ENCODE measurements at regions of chr2 and their contacts with region 1.

Region 1: DNA sequence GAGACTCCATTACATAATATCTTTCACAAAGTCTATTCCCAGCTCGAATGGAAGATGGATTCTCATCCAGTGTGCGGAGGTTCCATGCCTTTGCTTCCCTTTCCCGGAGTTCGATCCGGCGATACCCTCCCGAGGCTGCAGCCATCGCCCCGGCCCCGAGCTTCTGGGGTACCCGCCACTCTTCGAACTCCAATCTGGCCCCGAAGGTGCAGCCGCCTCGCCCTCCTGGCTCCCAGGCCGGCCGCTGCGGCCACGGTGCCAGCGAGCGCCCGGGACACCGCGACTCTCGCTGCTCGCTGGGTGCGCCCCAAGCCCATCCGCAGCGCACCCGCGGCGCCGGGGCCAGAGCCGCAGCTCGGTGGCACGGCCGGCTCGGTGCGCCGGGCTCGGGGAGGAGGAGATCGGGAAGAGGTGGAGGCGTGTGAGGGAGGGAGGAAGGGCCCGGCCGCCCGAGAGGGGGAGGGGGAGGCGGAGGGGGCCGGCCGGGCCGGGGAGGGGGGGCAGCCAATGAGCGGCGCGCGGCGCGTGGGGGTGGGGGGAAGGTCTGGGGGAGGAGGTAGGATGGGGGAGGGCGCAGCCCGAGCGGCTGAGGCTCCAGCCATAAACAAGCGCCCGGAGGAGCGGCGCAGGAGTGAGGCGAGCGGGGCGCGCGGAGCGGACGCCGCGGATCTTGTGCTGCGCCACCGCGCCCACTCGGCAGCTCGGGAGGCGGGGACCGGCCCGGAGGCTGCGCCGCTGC is at the start of gene CRIM1:
- DNase-seq: peak; percentile 91 to 97 (median 96)
- ATAC-seq: peak; percentile 86 to 90
- H3K4me3 ChIP-seq: peak within 1 kb of the TSS; percentile 97
- H3K27ac ChIP-seq: peak within 1 kb of the TSS; percentile 46
- H3K4me1 ChIP-seq: no peaks in the 10 kb centered on the region
- H3K27me3 ChIP-seq: no peaks in the 10 kb centered on the region
- total RNA-seq, gene CRIM1: 21.2 to 34.0 (median 29.3) TPM

Region 2: DNA sequence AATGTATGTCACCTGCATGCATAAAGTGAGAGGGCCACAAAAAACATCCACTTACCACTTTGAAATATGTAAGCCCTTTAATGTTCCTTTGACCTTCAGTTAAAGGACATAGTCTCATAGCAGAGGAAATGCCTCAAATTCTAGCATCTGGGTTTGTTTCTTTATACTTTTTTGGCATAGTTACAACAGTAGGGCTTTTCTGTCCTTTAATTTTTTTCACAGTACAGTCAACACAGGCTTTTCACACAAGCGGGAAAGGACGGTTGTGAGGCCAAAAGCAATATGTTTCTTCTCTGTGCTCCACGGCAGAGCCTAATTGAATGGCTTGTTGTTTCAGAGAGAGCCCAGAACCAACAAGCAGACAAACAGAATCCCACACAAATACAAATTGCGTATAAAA is 57.9 kb after region 1 on chr2:
- intact Hi-C with region 1: loop called in 1 of 4 experiments (anchors 5 kb)
- DNase-seq: no peak
- ATAC-seq: peak; percentile 53 to 59
- H3K4me3 ChIP-seq: no peak overlapping the region
- H3K27ac ChIP-seq: no peak overlapping the region
- H3K4me1 ChIP-seq: peaks cover 12% of the 10 kb centered on the region
- H3K27me3 ChIP-seq: no peaks in the 10 kb centered on the region

Region 3: GRCh38 chr2:36461039-36461681 is 105.8 kb after region 1 on chr2:
- intact Hi-C with region 1: loop called in 1 of 4 experiments (anchors 10 kb)
- DNase-seq: no peak
- ATAC-seq: peak in 1 of 2 donors; percentile 70
- H3K4me3 ChIP-seq: no peak overlapping the region
- H3K27ac ChIP-seq: no peak overlapping the region
- H3K4me1 ChIP-seq: peaks cover 10% of the 10 kb centered on the region
- H3K27me3 ChIP-seq: no peaks in the 10 kb centered on the region

Region 4: DNA sequence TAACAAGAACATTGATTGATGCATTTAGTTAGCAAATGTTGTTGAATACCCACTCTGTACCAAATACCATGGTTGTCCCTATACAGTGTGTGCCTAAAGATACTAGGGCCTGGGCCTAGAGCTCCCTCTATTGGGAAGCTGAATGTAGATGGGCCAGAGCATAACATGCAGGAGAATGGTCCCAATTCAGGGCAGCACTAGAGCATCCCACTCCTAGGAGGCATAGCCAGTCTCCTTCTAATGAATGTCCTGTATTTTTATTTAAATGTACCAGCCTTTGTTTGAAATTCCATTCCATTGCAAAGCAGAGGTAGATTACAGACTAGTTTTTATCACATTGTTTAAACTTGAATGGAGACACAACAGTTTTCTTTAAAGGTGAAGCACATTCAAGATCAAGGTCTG is 152.1 kb after region 1 on chr2:
- intact Hi-C with region 1: loop called (anchors 2 to 10 kb)
- DNase-seq: peak; percentile 32 to 55 (median 35)
- ATAC-seq: peak; percentile 90 to 95
- H3K4me3 ChIP-seq: no peak overlapping the region
- H3K27ac ChIP-seq: no peak overlapping the region
- H3K4me1 ChIP-seq: no peaks in the 10 kb centered on the region
- H3K27me3 ChIP-seq: no peaks in the 10 kb centered on the region

Region 5: DNA sequence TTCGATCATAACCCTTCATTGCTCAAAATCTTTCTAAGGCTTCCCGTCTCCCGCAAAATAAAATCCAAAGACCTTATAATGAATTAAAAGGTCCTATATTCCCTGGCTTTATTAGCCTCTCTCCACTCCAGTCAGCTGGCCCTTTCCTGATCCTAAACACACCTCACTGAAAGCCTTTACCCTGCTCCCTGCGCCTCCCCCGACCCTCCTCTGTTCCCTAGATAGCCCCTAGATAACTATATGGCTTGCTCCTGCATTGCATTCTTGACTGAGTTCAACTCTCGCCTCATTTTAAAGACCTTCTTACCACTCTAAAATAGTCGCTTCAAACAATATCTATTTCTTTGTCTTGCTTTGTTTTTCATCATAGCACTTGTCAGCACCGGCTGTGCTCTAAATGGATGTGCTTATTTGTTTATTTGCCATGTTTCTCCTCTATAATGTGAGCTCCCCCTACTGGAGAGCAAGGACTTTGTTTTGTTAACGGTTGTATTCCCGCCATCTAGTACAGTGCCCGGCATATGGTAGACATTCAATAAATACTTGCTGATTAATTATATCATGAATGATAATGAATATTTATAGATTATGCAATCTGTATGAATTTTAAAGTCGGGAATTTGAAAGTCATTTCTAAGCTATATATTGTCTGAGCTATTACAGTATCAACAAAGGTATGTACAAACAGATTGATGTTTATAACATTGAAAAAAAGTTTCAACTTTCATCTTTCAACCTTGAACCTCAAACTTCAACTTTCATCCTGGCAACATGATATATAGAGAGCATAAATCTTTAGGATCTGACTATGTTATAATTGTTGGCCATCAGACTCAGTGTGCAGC is 308.8 kb after region 1 on chr2:
- intact Hi-C with region 1: loop called in 3 of 4 experiments (anchors 5 kb)
- DNase-seq: no peak
- ATAC-seq: peak; percentile 76 to 79
- H3K4me3 ChIP-seq: no peak overlapping the region
- H3K27ac ChIP-seq: no peak overlapping the region
- H3K4me1 ChIP-seq: no peaks in the 10 kb centered on the region
- H3K27me3 ChIP-seq: no peaks in the 10 kb centered on the region

Region 6: GRCh38 chr2:36785179-36785795 is 430.0 kb after region 1 on chr2:
- intact Hi-C with region 1: loop called in 1 of 4 experiments (anchors 5 kb)
- DNase-seq: peak in 2 of 3 donors; percentile 67 to 71
- ATAC-seq: peak; percentile 40 to 45
- H3K4me3 ChIP-seq: no peak overlapping the region
- H3K27ac ChIP-seq: no peak overlapping the region
- H3K4me1 ChIP-seq: peaks cover 2% of the 10 kb centered on the region
- H3K27me3 ChIP-seq: no peaks in the 10 kb centered on the region